ENCODE measurements at regions of chr1 and their contacts with region 1.

Region 1: GRCh38 chr1:25037174-25038074 is 107.3 kb upstream of the RUNX3 start:
- DNase-seq: no peak
- H3K4me3 ChIP-seq: no peak overlapping the region
- H3K27ac ChIP-seq: no peak overlapping the region
- H3K4me1 ChIP-seq: peaks cover 5% of the 10 kb centered on the region
- H3K27me3 ChIP-seq: no peaks in the 10 kb centered on the region
- CTCF ChIP-seq: peak; percentile 65 to 68

Region 2: GRCh38 chr1:24847995-24848881 is 189.2 kb before region 1 on chr1:
- CTCF ChIA-PET with region 1: no interaction called
- dilution Hi-C with region 1: no loop called
- in situ Hi-C with region 1: no loop called
- intact Hi-C with region 1: loop called (anchors 2 kb)
- DNase-seq: peak; percentile 54
- H3K4me3 ChIP-seq: peak overlapping the region; percentile 23 to 41 (median 41)
- H3K27ac ChIP-seq: no peak overlapping the region
- H3K4me1 ChIP-seq: peaks cover 11% of the 10 kb centered on the region
- H3K27me3 ChIP-seq: no peaks in the 10 kb centered on the region
- CTCF ChIP-seq: peak; percentile 58 to 95

Region 3: DNA sequence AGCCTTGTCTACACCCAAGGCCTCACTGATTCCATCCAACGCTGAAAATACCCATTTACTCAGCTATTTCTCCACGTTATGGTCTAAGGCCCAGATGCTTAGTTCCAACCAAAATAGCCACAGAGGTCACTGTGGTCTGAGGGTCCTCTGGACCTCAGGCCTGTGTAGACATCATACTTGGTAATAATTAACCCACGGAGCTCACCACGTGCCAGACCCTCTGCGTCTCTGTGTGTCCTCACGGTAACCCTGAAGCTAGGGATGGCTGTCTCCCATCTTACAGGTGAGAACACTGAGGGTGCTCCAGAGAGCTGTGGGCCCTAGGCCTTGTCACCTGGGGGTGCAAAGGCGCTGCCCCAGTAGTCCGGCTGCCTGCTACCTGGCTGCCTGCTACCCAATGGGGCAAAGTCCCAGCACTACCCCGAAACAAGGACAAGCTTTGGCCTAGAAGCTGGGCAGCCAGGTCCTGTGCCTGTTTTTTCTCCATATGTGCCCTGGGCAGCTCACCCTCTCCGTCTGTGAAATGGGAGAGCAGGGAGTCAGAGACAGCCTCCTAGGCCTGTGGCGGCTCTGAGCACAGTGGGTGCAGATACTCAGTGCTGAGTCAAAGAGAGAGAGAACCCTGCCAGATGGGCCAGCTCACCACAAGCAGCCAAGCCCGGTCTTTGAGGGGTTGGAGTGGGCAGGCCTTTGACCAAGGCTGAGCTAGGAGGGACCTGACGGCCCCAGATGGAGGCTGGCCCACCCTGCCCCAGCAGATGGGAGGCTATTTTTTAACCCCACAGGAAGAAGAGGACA is 90.4 kb before region 1 on chr1:
- CTCF ChIA-PET with region 1: no interaction called
- dilution Hi-C with region 1: no loop called
- in situ Hi-C with region 1: loop called in 1 of 2 experiments (anchors 10 kb)
- intact Hi-C with region 1: no loop called
- DNase-seq: no peak
- H3K4me3 ChIP-seq: no peak overlapping the region
- H3K27ac ChIP-seq: no peak overlapping the region
- H3K4me1 ChIP-seq: peaks cover 9% of the 10 kb centered on the region
- H3K27me3 ChIP-seq: peaks cover 4% of the 10 kb centered on the region
- CTCF ChIP-seq: no peak

Region 4: DNA sequence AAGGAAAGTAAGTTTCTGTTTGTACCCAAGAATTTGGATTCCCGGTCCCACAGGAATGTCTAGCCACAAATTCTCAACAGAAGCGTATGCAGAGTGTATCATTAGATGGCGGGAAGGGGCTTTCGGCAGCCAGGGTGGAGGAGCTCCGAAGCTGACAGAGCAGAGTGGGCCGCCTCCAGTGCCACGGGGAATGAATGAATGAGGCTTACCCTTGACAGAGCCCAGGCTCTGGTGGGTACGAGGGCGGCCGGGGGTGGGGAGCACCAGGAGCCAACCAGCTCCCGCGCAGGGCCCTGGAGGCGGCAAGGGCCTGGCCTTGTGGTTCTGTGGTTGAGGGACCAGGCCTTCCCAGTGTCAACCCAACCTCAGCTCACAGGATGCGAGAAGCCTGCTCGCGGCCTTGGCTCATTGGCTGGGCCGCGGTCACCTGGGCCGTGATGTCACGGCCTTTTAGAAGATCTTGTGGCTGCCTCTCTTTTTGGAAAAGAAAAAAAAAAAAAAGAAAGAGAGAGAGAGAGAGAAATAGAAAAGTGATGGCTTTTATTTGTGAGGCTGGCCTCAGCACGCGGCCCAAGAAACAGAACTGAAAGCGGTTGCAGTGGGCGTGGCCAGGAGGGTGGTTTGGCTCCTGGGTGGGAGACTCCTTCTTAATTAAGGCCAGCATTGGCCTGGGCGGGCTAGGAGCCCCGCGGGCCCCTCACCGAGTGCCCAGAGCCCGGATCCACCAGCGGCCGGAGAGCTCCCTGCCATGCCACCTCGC is 72.4 kb before region 1 on chr1:
- CTCF ChIA-PET with region 1: no interaction called
- dilution Hi-C with region 1: no loop called
- in situ Hi-C with region 1: no loop called
- intact Hi-C with region 1: no loop called
- DNase-seq: no peak
- H3K4me3 ChIP-seq: no peak overlapping the region
- H3K27ac ChIP-seq: no peak overlapping the region
- H3K4me1 ChIP-seq: no peaks in the 10 kb centered on the region
- H3K27me3 ChIP-seq: no peaks in the 10 kb centered on the region
- CTCF ChIP-seq: no peak

Region 5: DNA sequence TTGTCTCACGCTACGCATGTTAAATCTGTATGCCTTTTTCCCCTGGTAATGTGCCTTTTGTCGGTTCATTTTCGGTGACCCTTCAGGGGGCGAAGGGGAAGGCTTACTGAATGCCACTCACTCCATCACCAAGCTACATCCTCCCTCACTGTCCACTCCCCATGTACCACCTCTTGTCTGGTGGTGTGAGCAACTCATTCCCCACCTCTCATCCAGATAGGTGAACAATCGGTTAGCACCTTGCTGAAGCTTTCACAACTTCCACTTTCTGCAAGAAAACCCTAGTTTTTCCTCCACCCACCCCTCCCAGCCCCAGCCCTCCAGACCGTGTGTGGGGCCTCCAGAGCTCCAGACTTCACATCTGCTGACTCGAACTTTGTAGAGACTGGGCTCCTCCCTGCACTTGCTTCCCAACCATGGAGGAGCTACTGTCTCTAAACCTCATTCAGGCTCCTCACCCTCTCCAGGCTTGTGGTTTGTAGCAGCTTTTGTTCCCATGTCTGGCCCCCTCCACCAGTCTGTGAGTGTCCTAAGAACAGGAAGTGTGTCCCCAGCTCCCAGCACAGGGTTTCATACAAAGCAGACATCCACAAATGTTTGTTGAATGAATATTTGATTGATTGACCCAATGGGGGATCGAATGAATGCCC is 58.9 kb before region 1 on chr1:
- CTCF ChIA-PET with region 1: no interaction called
- dilution Hi-C with region 1: no loop called
- in situ Hi-C with region 1: no loop called
- intact Hi-C with region 1: no loop called
- DNase-seq: no peak
- H3K4me3 ChIP-seq: no peak overlapping the region
- H3K27ac ChIP-seq: no peak overlapping the region
- H3K4me1 ChIP-seq: peaks cover 8% of the 10 kb centered on the region
- H3K27me3 ChIP-seq: no peaks in the 10 kb centered on the region
- CTCF ChIP-seq: no peak

Region 6: GRCh38 chr1:25117233-25117823 is 79.9 kb after region 1 on chr1:
- CTCF ChIA-PET with region 1: no interaction called
- dilution Hi-C with region 1: no loop called
- in situ Hi-C with region 1: no loop called
- intact Hi-C with region 1: no loop called
- DNase-seq: peak; percentile 33
- H3K4me3 ChIP-seq: no peak overlapping the region
- H3K27ac ChIP-seq: no peak overlapping the region
- H3K4me1 ChIP-seq: no peaks in the 10 kb centered on the region
- H3K27me3 ChIP-seq: peaks cover 4% of the 10 kb centered on the region
- CTCF ChIP-seq: peak; percentile 53 to 60

Measured in mammary epithelial cell (primary cell).